B cell (primary cell): ENCODE measurements at regions of chrX and their contacts with region 1.

Region 1: GRCh38 chrX:12771445-12772069 is 19.7 kb upstream of the PRPS2 start:
- DNase-seq: peak; percentile 87
- ATAC-seq: peak; percentile 100
- H3K4me3 ChIP-seq: no peak overlapping the region
- H3K4me3 Mint-ChIP-seq: peak overlapping the region; percentile 37
- H3K27ac ChIP-seq: no peak overlapping the region
- H3K27ac Mint-ChIP-seq: no peak overlapping the region
- H3K4me1 ChIP-seq: peaks cover 8 to 12% of the 10 kb centered on the region in 2 donors
- H3K4me1 Mint-ChIP-seq: peaks cover 10% of the 10 kb centered on the region
- H3K27me3 ChIP-seq: peaks cover 0 to 2% (median 0%) of the 10 kb centered on the region in 4 experiments
- H3K27me3 Mint-ChIP-seq: peaks cover 4% of the 10 kb centered on the region
- CTCF ChIP-seq: peak; percentile 76

Region 2: DNA sequence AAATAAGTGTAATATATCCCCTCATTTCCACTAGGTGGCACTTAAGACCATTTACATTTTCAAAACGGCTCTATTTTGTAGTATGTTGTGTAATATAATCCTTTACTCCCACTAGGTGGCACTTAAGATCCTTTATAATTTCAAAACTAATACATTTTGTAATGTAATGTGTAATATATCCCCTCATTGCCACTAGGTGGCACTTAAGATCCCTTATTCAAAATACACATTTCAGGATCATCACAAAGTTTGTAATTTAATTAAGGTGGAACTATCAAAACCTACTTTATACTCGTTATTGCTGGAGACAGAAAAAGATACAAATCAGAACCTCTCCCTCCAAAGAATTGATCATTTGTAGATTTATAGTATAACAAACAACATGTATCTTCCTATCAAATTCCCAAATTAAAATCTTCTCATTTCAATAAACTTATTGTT is 1238.3 kb before region 1 on chrX:
- CTCF ChIA-PET with region 1: no interaction called
- POLR2A ChIA-PET with region 1: no interaction called
- intact Hi-C with region 1: loop called (anchors 2 kb)
- DNase-seq: peak; percentile 75
- ATAC-seq: peak; percentile 99
- H3K4me3 ChIP-seq: no peak overlapping the region
- H3K4me3 Mint-ChIP-seq: no peak overlapping the region
- H3K27ac ChIP-seq: no peak overlapping the region
- H3K27ac Mint-ChIP-seq: no peak overlapping the region
- H3K4me1 ChIP-seq: no peaks in the 10 kb centered on the region
- H3K4me1 Mint-ChIP-seq: peaks cover 2% of the 10 kb centered on the region
- H3K27me3 ChIP-seq: peaks cover 0 to 5% (median 0%) of the 10 kb centered on the region in 4 experiments
- H3K27me3 Mint-ChIP-seq: no peaks in the 10 kb centered on the region
- CTCF ChIP-seq: peak; percentile 90

Region 3: DNA sequence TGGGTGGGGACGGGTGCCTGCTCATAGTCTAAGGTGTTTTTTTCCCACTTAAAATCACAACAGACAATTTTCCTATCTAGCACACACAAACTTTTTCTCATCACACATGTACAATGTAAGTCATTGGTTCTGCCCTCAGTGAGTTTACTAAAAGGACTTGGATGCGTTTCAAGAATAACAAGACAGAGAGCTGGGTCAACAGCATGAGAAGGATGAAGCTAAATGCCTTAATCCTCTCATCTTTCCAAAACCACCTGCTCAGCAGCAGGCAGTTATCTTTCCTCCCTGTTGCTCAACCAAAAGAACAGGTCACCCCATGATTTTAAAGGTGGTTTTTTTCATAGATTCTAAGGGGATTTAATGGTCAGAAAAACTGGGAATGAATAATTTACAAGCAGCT is 1003.1 kb after region 1 on chrX:
- CTCF ChIA-PET with region 1: no interaction called
- POLR2A ChIA-PET with region 1: interaction called, 11 read pairs
- intact Hi-C with region 1: no loop called
- DNase-seq: no peak
- ATAC-seq: no peak
- H3K4me3 ChIP-seq: no peak overlapping the region
- H3K4me3 Mint-ChIP-seq: no peak overlapping the region
- H3K27ac ChIP-seq: no peak overlapping the region
- H3K27ac Mint-ChIP-seq: no peak overlapping the region
- H3K4me1 ChIP-seq: no peaks in the 10 kb centered on the region
- H3K4me1 Mint-ChIP-seq: no peaks in the 10 kb centered on the region
- H3K27me3 ChIP-seq: no peaks in the 10 kb centered on the region
- H3K27me3 Mint-ChIP-seq: no peaks in the 10 kb centered on the region
- CTCF ChIP-seq: no peak